AG04450 (cell line): ENCODE measurements at regions of chr9 and their contacts with region 1.

Region 1: GRCh38 chr9:121322037-121322775 is 47.8 kb downstream of the STOM start:
- DNase-seq: peak; percentile 91
- H3K4me3 ChIP-seq: no peak overlapping the region
- H3K27ac ChIP-seq: peak overlapping the region; percentile 96
- H3K27me3 ChIP-seq: no peaks in the 10 kb centered on the region
- CTCF ChIP-seq: no peak

Region 2: DNA sequence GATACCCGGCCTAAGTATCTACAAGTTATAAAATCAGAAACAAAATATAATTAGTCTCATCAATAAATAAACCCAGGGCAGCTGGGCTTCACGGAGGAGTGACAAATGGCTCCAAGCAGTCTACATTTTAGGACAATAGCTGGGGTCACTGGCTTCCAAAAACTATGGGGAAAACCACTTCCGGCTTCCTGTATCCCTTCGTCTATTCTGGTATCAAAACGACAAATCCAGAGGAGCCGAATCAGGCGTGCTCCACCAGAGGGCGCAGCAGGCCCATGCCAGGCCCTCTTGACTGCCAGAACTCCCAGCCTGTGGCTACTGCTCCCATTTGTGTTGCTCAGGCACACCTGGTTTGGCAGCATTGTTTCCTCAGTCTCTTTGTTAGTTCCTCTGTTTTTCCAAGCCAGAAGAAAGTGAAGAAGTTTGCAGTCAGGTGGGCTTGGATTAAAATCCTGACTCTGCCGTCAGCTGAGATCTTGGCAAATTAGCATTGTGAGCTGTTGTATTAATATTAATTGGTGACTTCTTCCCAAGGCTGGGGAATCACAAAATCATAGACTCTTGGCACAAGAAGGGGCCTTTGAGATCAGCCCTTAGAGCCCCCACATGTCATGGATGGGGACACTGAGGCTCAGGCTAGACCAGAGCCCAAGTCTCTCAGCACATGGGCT is 108.9 kb before region 1 on chr9:
- CTCF ChIA-PET with region 1: interaction called, 60 read pairs
- POLR2A ChIA-PET with region 1: no interaction called
- DNase-seq: peak; percentile 77
- H3K4me3 ChIP-seq: no peak overlapping the region
- H3K27ac ChIP-seq: no peak overlapping the region
- H3K27me3 ChIP-seq: no peaks in the 10 kb centered on the region
- CTCF ChIP-seq: peak; percentile 99

Region 3: GRCh38 chr9:121278535-121279261 is 43.5 kb before region 1 on chr9:
- CTCF ChIA-PET with region 1: interaction called, 19 read pairs
- POLR2A ChIA-PET with region 1: interaction called, 4 read pairs
- DNase-seq: peak; percentile 97
- H3K4me3 ChIP-seq: peak overlapping the region; percentile 35
- H3K27ac ChIP-seq: peak overlapping the region; percentile 96
- H3K27me3 ChIP-seq: no peaks in the 10 kb centered on the region
- CTCF ChIP-seq: peak; percentile 79

Region 4: GRCh38 chr9:121340676-121341392 is 18.6 kb after region 1 on chr9:
- CTCF ChIA-PET with region 1: interaction called, 23 read pairs
- POLR2A ChIA-PET with region 1: no interaction called
- DNase-seq: no peak
- H3K4me3 ChIP-seq: no peak overlapping the region
- H3K27ac ChIP-seq: no peak overlapping the region
- H3K27me3 ChIP-seq: no peaks in the 10 kb centered on the region
- CTCF ChIP-seq: no peak

Region 5: DNA sequence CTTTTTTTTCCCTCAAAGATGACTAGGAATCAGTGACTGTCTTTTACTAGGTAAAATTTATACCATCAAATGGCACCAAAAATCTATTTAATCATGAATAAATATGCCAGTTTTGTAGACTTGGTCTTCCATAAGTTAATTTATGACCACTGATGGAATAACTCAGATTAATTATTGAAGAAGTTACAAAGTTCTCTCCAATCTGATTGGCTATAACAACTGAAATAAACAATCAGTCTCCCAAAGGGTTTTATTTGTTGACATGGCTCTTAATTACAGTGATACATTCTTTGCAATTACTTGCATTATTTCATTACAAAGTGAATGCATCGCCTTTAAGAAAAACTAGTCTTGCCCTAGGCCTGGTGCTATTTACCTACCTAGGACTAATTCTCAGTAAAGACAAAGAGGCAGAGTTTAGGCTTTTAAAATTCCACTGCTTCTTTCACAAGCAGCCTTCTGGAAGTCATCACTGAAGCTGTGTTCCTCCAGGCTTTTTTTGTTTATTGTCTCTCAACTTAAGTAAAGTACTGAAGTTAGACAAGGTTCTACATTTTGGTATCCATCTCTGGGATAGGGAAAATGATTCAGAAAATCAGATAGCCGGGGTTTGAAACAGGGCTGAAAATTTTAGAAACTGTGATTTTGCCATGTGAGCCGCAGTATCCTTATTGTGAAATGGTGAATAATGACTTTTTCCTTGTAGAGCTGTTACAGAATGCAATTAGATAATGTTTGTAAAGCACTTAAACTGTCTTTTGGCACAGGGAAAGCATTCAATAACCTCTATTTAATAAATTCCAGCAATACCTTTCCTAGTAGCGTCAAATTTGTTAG is 45.3 kb after region 1 on chr9:
- CTCF ChIA-PET with region 1: interaction called, 169 read pairs
- POLR2A ChIA-PET with region 1: interaction called, 3 read pairs
- DNase-seq: no peak
- H3K4me3 ChIP-seq: peak overlapping the region; percentile 81
- H3K27ac ChIP-seq: no peak overlapping the region
- H3K27me3 ChIP-seq: no peaks in the 10 kb centered on the region
- CTCF ChIP-seq: no peak

Region 6: DNA sequence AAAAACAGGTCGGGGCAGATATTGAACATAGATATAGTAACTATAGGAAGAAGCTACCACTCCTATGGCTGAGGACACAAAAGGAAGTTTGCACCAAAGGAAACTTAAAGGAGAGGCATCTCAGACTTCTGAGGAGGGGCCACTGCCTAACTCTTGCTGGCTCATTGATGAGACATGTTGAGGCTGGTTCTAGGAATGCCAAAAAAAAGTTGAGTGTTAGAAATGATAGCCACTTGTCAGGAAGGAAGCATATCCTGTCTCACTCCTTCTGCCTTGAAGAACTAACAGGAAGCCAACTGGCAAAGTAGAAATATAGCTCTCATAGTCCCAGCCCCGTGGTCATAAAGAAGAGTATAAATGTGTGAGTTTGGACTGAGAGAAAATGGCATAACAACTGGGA is 71.1 kb after region 1 on chr9:
- CTCF ChIA-PET with region 1: interaction called, 202 read pairs
- POLR2A ChIA-PET with region 1: interaction called, 10 read pairs
- DNase-seq: no peak
- H3K4me3 ChIP-seq: no peak overlapping the region
- H3K27ac ChIP-seq: no peak overlapping the region
- H3K27me3 ChIP-seq: no peaks in the 10 kb centered on the region
- CTCF ChIP-seq: no peak

Region 7: GRCh38 chr9:121439711-121440664 is 117.8 kb after region 1 on chr9:
- CTCF ChIA-PET with region 1: interaction called, 39 read pairs
- POLR2A ChIA-PET with region 1: interaction called, 4 read pairs
- DNase-seq: no peak
- H3K4me3 ChIP-seq: no peak overlapping the region
- H3K27ac ChIP-seq: no peak overlapping the region
- H3K27me3 ChIP-seq: peaks cover 50% of the 10 kb centered on the region
- CTCF ChIP-seq: peak; percentile 55

Region 8: DNA sequence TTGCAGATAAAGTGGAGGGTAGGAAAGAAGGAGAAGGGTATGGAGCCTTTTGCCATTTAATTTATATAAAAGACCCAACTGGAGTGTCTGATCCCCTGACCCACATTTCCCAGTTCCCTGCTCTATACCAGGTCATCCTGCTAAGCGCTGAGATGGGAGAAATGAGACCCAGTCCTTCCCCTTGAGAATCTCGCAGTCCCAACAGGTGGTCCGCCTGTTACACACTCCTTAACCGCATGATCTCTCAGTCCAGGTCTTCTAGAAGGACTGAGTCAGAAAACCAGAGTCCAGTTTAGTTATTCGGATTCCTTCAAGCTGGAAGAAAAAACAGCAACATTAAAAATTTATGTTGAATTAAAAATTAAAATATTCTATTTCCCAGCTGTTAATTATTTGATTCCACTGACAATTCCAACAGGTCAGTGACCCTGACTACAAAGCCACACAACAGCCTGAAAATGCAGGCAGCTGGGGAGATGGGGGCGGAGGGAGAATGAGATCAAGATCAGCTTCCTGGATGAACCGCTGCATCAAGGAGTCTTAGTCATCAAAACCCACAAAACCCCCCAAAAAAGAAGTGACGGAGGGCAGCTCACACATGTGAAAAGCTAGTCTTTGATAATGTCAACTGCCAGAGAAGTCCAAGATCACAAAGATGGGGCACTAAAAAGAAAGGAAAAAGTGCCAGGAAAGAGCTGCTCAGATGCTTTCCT is 133.5 kb after region 1 on chr9:
- CTCF ChIA-PET with region 1: no interaction called
- POLR2A ChIA-PET with region 1: no interaction called
- DNase-seq: no peak
- H3K4me3 ChIP-seq: no peak overlapping the region
- H3K27ac ChIP-seq: peak overlapping the region; percentile 11
- H3K27me3 ChIP-seq: peaks cover 55% of the 10 kb centered on the region
- CTCF ChIP-seq: no peak